Activated naive CD4-positive, alpha-beta T cell treated with anti-CD3 and anti-CD28 coated beads for 36 hours (primary cell): ENCODE measurements at regions of chr9 and their contacts with region 1.

Region 1: GRCh38 chr9:72022841-72023240 is 37.6 kb downstream of the C9orf57 start:
- DNase-seq: no peak
- H3K4me3 Mint-ChIP-seq: no peak overlapping the region
- H3K27ac Mint-ChIP-seq: no peak overlapping the region
- H3K4me1 Mint-ChIP-seq: no peaks in the 10 kb centered on the region
- H3K27me3 Mint-ChIP-seq: no peaks in the 10 kb centered on the region

Region 2: DNA sequence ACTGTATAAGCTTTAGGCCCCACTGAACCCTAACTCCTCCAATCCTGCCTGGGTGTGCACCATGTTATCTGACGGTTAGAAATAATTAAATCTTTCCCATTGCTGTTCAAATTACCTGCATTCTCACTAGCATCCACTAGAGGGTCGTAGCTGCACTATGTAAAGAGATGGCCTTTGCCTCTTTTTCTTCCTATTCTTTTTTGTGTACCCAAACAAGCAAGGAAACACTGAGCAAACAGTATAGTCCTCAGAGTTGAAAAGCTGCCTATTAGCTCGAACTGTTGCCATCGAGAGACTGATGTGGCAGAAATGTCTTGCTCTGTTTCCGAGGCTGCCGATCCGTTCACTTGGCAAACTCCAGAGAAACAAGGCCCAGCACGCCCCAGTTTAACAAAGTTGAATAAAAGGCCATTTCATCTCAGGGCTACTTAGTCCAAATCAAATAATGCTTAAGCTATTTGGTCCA is 737.6 kb before region 1 on chr9:
- CTCF ChIA-PET with region 1: interaction called, 14 read pairs
- intact Hi-C with region 1: loop called (anchors 1 kb)
- DNase-seq: peak; percentile 58
- H3K4me3 Mint-ChIP-seq: no peak overlapping the region
- H3K27ac Mint-ChIP-seq: no peak overlapping the region
- H3K4me1 Mint-ChIP-seq: no peaks in the 10 kb centered on the region
- H3K27me3 Mint-ChIP-seq: peaks cover 7% of the 10 kb centered on the region

Region 3: GRCh38 chr9:71783120-71783530 is 239.7 kb before region 1 on chr9:
- CTCF ChIA-PET with region 1: interaction called, 7 read pairs
- intact Hi-C with region 1: loop called (anchors 1 kb)
- DNase-seq: peak; percentile 95
- H3K4me3 Mint-ChIP-seq: peak overlapping the region; percentile 67
- H3K27ac Mint-ChIP-seq: peak overlapping the region; percentile 92
- H3K4me1 Mint-ChIP-seq: peaks cover 47% of the 10 kb centered on the region
- H3K27me3 Mint-ChIP-seq: no peaks in the 10 kb centered on the region

Region 4: DNA sequence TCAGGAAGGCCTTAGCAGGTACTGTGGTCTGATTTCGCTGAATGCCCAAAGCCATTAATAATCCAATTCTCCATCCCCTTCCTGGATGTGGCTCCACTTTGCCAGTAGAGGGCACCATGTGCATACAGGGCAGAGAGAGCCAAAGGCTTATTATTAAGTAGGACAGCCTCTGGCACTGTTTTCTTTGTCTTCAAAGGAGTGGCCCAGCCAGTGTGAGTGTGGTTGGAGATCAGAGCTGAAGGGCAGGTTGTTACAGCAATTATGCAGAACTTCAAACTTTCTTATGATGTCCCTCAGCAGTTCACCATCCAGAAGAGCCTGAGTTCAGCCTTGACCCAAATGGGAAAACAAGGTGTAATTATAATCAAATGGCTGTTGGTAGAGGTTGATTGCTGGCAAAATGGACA is 215.9 kb before region 1 on chr9:
- CTCF ChIA-PET with region 1: interaction called, 126 read pairs
- intact Hi-C with region 1: loop called (anchors 1 kb)
- DNase-seq: peak; percentile 77
- H3K4me3 Mint-ChIP-seq: no peak overlapping the region
- H3K27ac Mint-ChIP-seq: no peak overlapping the region
- H3K4me1 Mint-ChIP-seq: peaks cover 8% of the 10 kb centered on the region
- H3K27me3 Mint-ChIP-seq: no peaks in the 10 kb centered on the region

Region 5: GRCh38 chr9:72038890-72039410 is 16.1 kb after region 1 on chr9:
- CTCF ChIA-PET with region 1: interaction called, 95 read pairs
- intact Hi-C with region 1: no loop called
- DNase-seq: peak; percentile 80
- H3K4me3 Mint-ChIP-seq: no peak overlapping the region
- H3K27ac Mint-ChIP-seq: no peak overlapping the region
- H3K4me1 Mint-ChIP-seq: peaks cover 4% of the 10 kb centered on the region
- H3K27me3 Mint-ChIP-seq: peaks cover 6% of the 10 kb centered on the region